Activated T-helper 1 cell treated with anti-CD3 and anti-CD28 coated beads, Interleukin-12 subunit alpha, Interleukin-12 subunit beta, Interleukin-2, Interleukin-4 antibody, amounts not matched to agents 30 ng/mL and 10 ng/mL and 1 ng/mL, durations not matched to agents 14 hours and 24 hours and 36 hours (primary cell): ENCODE measurements at regions of chr4 and their contacts with region 1.

Region 1: GRCh38 chr4:159077702-159078495 is 25.0 kb upstream of the RAPGEF2 start:
- DNase-seq: no peak
- H3K4me3 Mint-ChIP-seq: peak overlapping the region; percentile 53
- H3K27ac Mint-ChIP-seq: peak overlapping the region; percentile 22
- H3K4me1 Mint-ChIP-seq: peaks cover 24% of the 10 kb centered on the region
- H3K27me3 Mint-ChIP-seq: peaks cover 2% of the 10 kb centered on the region

Region 2: DNA sequence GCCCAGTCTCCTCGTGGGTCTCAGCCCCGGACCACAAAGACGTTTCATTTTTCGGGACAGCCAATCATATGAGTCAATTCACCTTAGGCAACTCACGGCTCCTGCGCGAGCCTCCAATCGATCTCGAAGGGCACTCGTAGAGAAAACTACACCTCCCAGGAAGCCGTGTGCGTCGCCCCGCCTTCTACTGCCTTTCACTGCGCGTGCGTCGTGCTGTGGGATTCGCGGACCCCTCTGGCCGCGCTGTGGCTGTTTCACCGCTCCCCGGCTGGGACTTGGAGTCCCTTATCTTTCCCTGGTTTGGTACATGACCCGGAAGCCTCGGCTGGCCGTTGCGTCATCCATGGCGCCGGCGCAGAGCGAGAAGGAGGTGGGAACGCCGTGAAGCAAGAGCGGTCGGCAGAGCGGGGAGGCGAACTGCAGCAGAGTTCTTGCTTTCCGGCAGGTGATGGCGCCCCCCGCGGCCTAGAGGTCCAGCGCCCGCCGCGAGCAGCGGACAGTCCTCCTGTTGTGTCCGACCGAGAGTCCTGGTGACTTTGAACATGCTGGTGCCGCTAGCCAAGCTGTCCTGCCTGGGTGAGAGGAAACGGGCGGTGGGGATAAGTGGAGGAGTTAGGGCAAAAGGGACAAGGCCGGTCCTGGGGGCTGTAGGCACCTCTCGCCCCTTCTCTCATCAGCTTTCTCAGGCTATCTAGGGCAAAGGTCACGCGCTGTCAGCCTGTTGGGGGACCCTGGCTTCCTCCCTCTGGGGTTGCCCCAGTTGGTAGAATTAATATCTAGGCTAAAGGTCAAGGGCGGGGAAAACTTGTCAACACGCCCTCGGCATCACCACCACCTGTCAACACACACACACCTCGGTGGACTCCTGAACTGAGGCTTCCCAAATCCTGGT is 405.7 kb before region 1 on chr4 and contains the start of gene ETFDH:
- intact Hi-C with region 1: loop called (anchors 1 kb)
- DNase-seq: peak; percentile 98
- H3K4me3 Mint-ChIP-seq: peak within 1 kb of the TSS; percentile 99
- H3K27ac Mint-ChIP-seq: peak within 1 kb of the TSS; percentile 96
- H3K4me1 Mint-ChIP-seq: peaks cover 46% of the 10 kb centered on the region
- H3K27me3 Mint-ChIP-seq: peaks cover 2% of the 10 kb centered on the region
- total RNA-seq, gene ETFDH: 19.9 and 21.5 TPM in 2 replicates

Region 3: GRCh38 chr4:158722917-158723793 is 354.7 kb before region 1 on chr4 and contains the start of gene PPID:
- intact Hi-C with region 1: loop called (anchors 5 kb)
- DNase-seq: peak; percentile 80
- H3K4me3 Mint-ChIP-seq: peak within 1 kb of the TSS; percentile 95
- H3K27ac Mint-ChIP-seq: peak within 1 kb of the TSS; percentile 100
- H3K4me1 Mint-ChIP-seq: peaks cover 59% of the 10 kb centered on the region
- H3K27me3 Mint-ChIP-seq: peaks cover 5% of the 10 kb centered on the region
- total RNA-seq, gene PPID: 52.8 and 55.4 TPM in 2 replicates

Region 4: DNA sequence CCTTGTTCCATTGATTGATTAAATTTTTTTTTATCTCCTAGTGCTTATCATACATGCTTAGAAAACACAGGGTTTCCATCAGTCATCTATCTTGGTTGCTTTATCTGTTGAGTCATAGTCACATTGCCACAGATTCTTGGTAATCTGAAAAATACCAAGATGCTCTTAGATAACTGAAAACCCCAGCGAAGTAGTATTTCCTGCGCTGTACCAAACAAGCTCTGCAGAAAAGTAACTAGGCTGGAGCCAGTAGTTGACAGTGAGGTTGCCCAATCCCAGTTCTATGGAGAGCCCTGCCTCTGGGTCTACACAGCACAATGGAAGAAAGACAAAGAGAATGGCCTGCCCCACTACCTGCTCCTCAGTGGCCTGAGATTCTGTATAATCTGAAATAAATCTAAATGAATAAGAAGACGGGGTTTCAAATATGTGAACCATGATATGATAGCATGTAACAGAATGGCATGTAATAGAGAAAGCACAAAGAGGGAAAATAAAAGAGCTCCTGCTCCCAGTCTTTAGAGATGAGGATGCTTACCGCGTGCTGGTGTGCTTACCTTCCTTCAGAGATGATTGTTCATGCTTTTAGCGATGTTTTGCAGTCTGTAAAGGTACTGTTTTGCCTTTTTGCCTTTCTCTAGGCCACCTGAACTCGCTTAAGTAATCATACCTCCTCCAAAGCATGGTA is 30.3 kb before region 1 on chr4:
- intact Hi-C with region 1: loop called (anchors 1 kb)
- DNase-seq: peak; percentile 32
- H3K4me3 Mint-ChIP-seq: peak overlapping the region; percentile 53
- H3K27ac Mint-ChIP-seq: peak overlapping the region; percentile 3
- H3K4me1 Mint-ChIP-seq: peaks cover 36% of the 10 kb centered on the region
- H3K27me3 Mint-ChIP-seq: peaks cover 3% of the 10 kb centered on the region

Region 5: GRCh38 chr4:159065510-159066310 is 12.2 kb before region 1 on chr4:
- intact Hi-C with region 1: loop called (anchors 2 kb)
- DNase-seq: no peak
- H3K4me3 Mint-ChIP-seq: no peak overlapping the region
- H3K27ac Mint-ChIP-seq: no peak overlapping the region
- H3K4me1 Mint-ChIP-seq: peaks cover 9% of the 10 kb centered on the region
- H3K27me3 Mint-ChIP-seq: no peaks in the 10 kb centered on the region

Region 6: DNA sequence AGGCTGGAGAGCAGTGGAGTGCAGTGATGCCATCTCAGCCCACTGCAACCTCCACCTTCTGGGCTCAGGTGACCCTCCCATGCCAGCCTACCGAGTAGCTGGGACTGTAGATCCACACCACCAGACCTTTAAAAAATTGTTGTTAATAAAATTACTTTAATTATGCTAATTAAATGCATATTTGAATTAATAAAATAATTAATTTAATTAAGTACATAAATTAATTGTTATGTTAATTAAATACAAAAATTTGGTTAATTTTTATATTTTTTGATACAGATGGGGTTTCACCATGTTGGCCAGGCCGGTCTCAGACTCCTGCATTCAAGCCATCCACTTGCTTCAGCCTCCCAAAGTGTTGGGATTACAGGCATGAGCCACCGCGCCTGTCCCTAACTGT is 12.4 kb after region 1 on chr4:
- intact Hi-C with region 1: no loop called
- DNase-seq: no peak
- H3K4me3 Mint-ChIP-seq: no peak overlapping the region
- H3K27ac Mint-ChIP-seq: no peak overlapping the region
- H3K4me1 Mint-ChIP-seq: no peaks in the 10 kb centered on the region
- H3K27me3 Mint-ChIP-seq: peaks cover 6% of the 10 kb centered on the region

Region 7: DNA sequence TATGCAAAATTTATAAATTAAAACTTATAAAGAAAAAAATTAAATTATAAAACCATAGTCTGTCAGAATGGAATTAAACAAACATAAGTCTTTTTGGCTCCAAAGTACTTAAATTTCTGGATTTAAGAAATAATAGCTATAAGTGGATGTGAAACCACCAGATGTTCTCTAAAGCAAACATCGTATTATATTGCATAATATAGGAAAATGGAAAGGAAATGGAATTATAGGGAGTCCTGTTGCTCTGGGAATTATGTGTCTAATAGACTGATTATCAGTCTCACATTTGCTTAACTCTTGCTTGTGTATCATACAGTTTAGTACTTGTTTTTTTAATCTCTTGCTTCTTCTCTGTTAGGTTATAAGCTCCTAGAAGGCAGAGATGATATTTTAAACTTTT is 844.2 kb after region 1 on chr4:
- intact Hi-C with region 1: no loop called
- DNase-seq: no peak
- H3K4me3 Mint-ChIP-seq: no peak overlapping the region
- H3K27ac Mint-ChIP-seq: no peak overlapping the region
- H3K4me1 Mint-ChIP-seq: no peaks in the 10 kb centered on the region
- H3K27me3 Mint-ChIP-seq: no peaks in the 10 kb centered on the region